IMR-90 (cell line): ENCODE measurements at regions of chr3 and their contacts with region 1.

Region 1: GRCh38 chr3:149273096-149273751 is 51.6 kb upstream of the CP start:
- DNase-seq: peak; percentile 91
- ATAC-seq: peak; percentile 83
- H3K4me3 ChIP-seq: no peak overlapping the region
- H3K27ac ChIP-seq: no peak overlapping the region
- H3K4me1 ChIP-seq: peaks cover 2% of the 10 kb centered on the region; the same call in 1 of the 2 replicates
- H3K27me3 ChIP-seq: no peaks in the 10 kb centered on the region
- CTCF ChIP-seq: peak; percentile 100; the same call in 1 of the 2 replicates
- POLR2A ChIP-seq: peak; percentile 52; the same call in 1 of the 2 replicates
- RAD21 ChIP-seq: peak; percentile 98

Region 2: GRCh38 chr3:149115114-149115513 is 158.1 kb before region 1 on chr3:
- CTCF ChIA-PET with region 1: interaction called, 6 read pairs
- POLR2A ChIA-PET with region 1: no interaction called
- dilution Hi-C with region 1: no loop called
- in situ Hi-C with region 1: loop called (anchors 5 kb)
- intact Hi-C with region 1: loop called (anchors 1 kb)
- DNase-seq: no peak
- ATAC-seq: no peak
- H3K4me3 ChIP-seq: no peak overlapping the region
- H3K27ac ChIP-seq: no peak overlapping the region
- H3K4me1 ChIP-seq: no peaks in the 10 kb centered on the region
- H3K27me3 ChIP-seq: no peaks in the 10 kb centered on the region
- CTCF ChIP-seq: no peak
- POLR2A ChIP-seq: no peak
- RAD21 ChIP-seq: no peak

Region 3: DNA sequence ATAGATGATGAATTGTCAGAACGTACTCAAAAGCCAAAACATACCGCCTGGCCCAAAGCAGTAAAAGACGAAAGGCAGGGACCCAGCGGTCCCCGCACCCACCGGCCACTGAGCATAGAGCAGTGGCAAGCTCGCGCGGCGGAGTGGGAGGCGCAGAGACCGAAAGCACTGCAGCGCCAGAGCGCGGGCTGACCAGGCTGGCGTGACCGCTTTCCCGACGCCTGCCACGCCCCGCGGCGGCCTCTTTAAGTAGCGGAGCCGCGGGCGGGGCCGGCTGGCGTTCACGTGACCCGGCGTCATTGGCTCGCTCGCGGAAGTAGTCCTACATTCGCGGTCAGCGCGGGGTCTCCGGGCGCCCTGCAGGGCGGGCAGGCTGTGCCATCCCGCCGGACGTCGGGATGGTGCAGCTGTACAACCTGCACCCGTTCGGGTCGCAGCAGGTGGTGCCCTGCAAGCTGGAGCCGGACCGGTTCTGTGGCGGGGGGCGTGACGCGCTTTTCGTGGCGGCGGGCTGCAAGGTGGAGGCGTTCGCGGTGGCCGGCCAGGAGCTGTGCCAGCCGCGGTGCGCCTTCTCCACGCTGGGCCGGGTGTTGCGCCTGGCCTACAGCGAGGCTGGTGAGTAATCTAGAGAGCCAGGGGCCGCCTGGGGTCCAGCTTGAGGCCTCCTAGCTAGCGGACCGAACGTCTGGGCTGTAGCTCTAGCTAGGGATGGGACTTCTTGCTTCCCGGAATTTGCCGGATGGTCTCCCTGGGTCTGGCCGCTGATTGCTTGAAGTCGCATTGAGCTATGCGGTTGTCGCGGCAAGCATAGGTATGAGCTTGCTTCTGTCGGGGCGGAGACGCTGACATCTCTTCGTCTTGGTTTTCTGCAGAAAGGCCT is 143.7 kb before region 1 on chr3 and contains the start of gene HPS3:
- CTCF ChIA-PET with region 1: no interaction called
- POLR2A ChIA-PET with region 1: no interaction called
- dilution Hi-C with region 1: no loop called
- in situ Hi-C with region 1: no loop called
- intact Hi-C with region 1: loop called (anchors 2 kb)
- DNase-seq: peak; percentile 85
- ATAC-seq: peak; percentile 98
- H3K4me3 ChIP-seq: peak within 1 kb of the TSS; percentile 75
- H3K27ac ChIP-seq: peak within 1 kb of the TSS; percentile 76
- H3K4me1 ChIP-seq: peaks cover 8% of the 10 kb centered on the region
- H3K27me3 ChIP-seq: no peaks in the 10 kb centered on the region
- CTCF ChIP-seq: no peak
- POLR2A ChIP-seq: peak; percentile 87
- RAD21 ChIP-seq: peak; percentile 24; the same call in 1 of the 2 replicates
- total RNA-seq, gene HPS3: 24.2 and 25.6 TPM in 2 replicates

Region 4: GRCh38 chr3:149339931-149340309 is 66.7 kb after region 1 on chr3:
- CTCF ChIA-PET with region 1: no interaction called
- POLR2A ChIA-PET with region 1: no interaction called
- dilution Hi-C with region 1: no loop called
- in situ Hi-C with region 1: no loop called
- intact Hi-C with region 1: loop called (anchors 2 kb)
- DNase-seq: peak; percentile 97
- ATAC-seq: peak; percentile 94
- H3K4me3 ChIP-seq: no peak overlapping the region
- H3K27ac ChIP-seq: peak overlapping the region; percentile 56
- H3K4me1 ChIP-seq: peaks cover 14% of the 10 kb centered on the region
- H3K27me3 ChIP-seq: no peaks in the 10 kb centered on the region
- CTCF ChIP-seq: no peak
- POLR2A ChIP-seq: no peak
- RAD21 ChIP-seq: no peak

Region 5: DNA sequence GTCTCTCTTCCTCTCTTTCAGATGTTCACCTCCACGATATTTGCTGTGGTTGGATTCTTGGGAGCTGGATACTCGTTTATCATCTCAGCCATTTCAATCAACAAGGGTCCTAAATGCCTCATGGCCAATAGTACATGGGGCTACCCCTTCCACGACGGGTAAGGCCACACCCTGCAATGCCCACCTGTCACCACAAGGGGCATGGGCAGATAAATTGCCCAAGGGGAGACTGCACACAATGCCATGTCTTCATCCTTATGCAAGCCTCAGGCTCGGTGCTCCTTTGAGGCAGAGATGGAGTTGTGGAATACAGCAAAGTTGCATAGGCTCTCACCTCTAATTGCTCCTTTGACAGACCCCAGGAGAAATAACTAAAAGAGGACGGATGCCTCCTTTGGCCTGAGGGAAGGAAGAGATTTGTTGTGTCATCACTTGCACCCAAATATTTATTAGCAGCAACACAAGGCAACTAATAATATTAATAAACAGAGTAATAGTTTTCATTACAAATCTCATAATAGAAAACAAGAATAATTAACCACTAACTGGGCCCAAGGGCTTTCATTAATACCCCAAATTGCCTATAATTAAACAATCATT is 214.5 kb after region 1 on chr3:
- CTCF ChIA-PET with region 1: no interaction called
- POLR2A ChIA-PET with region 1: no interaction called
- dilution Hi-C with region 1: no loop called
- in situ Hi-C with region 1: loop called (anchors 5 kb)
- intact Hi-C with region 1: loop called (anchors 2 kb)
- DNase-seq: no peak
- ATAC-seq: no peak
- H3K4me3 ChIP-seq: no peak overlapping the region
- H3K27ac ChIP-seq: no peak overlapping the region
- H3K4me1 ChIP-seq: peaks cover 2% of the 10 kb centered on the region
- H3K27me3 ChIP-seq: no peaks in the 10 kb centered on the region
- CTCF ChIP-seq: no peak; the same call in 1 of the 2 replicates
- POLR2A ChIP-seq: no peak
- RAD21 ChIP-seq: no peak